GM12878 (cell line): ENCODE measurements at regions of chr12 and their contacts with region 1.

Region 1: GRCh38 chr12:59403259-59403932 is 192.4 kb upstream of the SLC16A7 start:
- DNase-seq: no peak
- ATAC-seq: peak; percentile 81
- H3K4me3 ChIP-seq: no peak overlapping the region
- H3K27ac ChIP-seq: no peak overlapping the region
- H3K4me1 ChIP-seq: no peaks in the 10 kb centered on the region
- H3K27me3 ChIP-seq: no peaks in the 10 kb centered on the region
- CTCF ChIP-seq: peak; percentile 72 to 77 (median 75)
- EP300 ChIP-seq: no peak
- POLR2A ChIP-seq: no peak
- RAD21 ChIP-seq: peak; percentile 86

Region 2: GRCh38 chr12:59808317-59808910 is 405.0 kb after region 1 on chr12:
- CTCF ChIA-PET with region 1: interaction called, 10 read pairs
- POLR2A ChIA-PET with region 1: no interaction called
- RAD21 ChIA-PET with region 1: no interaction called
- SMC1A ChIA-PET with region 1: interaction called, 4 read pairs
- in situ Hi-C with region 1: loop called (anchors 10 kb)
- intact Hi-C with region 1: loop called (anchors 1 kb)
- DNase-seq: no peak
- ATAC-seq: peak; percentile 94
- H3K4me3 ChIP-seq: no peak overlapping the region
- H3K27ac ChIP-seq: no peak overlapping the region
- H3K4me1 ChIP-seq: no peaks in the 10 kb centered on the region
- H3K27me3 ChIP-seq: no peaks in the 10 kb centered on the region
- CTCF ChIP-seq: peak; percentile 48 to 70 (median 69)
- EP300 ChIP-seq: no peak
- POLR2A ChIP-seq: no peak
- RAD21 ChIP-seq: peak; percentile 77

Region 3: GRCh38 chr12:59834659-59835474 is 431.5 kb after region 1 on chr12:
- CTCF ChIA-PET with region 1: interaction called, 16 read pairs
- POLR2A ChIA-PET with region 1: no interaction called
- RAD21 ChIA-PET with region 1: interaction called, 6 read pairs
- SMC1A ChIA-PET with region 1: interaction called, 7 read pairs
- in situ Hi-C with region 1: loop called (anchors 10 kb)
- intact Hi-C with region 1: loop called (anchors 1 kb)
- DNase-seq: no peak
- ATAC-seq: peak; percentile 74
- H3K4me3 ChIP-seq: no peak overlapping the region
- H3K27ac ChIP-seq: no peak overlapping the region
- H3K4me1 ChIP-seq: no peaks in the 10 kb centered on the region
- H3K27me3 ChIP-seq: no peaks in the 10 kb centered on the region
- CTCF ChIP-seq: peak; percentile 38 to 45 (median 42); a peak in 3 of 6 replicates
- EP300 ChIP-seq: no peak
- POLR2A ChIP-seq: no peak
- RAD21 ChIP-seq: peak; percentile 40; the same call in 1 of the 2 replicates

Region 4: DNA sequence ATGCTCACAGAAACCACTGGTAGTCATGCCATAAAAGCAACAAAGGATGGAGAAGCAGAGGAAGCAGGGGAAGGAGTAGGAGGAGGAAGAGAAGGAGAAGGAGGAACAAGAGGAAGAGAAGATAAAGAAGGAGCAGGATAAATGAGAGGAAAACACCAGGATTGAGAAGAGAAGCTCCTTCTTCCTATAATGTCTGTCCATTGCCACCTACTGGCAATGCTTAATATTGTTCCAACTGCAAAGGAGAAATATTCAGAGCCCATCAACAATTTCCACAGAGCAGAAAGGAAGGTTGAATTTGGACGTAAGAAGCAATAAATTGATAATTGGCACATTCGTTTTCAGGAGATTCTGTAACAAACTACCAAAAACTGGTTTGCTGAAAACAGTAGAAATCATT is 1090.8 kb after region 1 on chr12:
- CTCF ChIA-PET with region 1: no interaction called
- POLR2A ChIA-PET with region 1: no interaction called
- RAD21 ChIA-PET with region 1: no interaction called
- SMC1A ChIA-PET with region 1: no interaction called
- in situ Hi-C with region 1: no loop called
- intact Hi-C with region 1: loop called (anchors 1 kb)
- DNase-seq: no peak
- ATAC-seq: peak; percentile 41; the same call in 1 of the 3 replicates
- H3K4me3 ChIP-seq: no peak overlapping the region
- H3K27ac ChIP-seq: no peak overlapping the region
- H3K4me1 ChIP-seq: no peaks in the 10 kb centered on the region
- H3K27me3 ChIP-seq: no peaks in the 10 kb centered on the region
- CTCF ChIP-seq: peak; percentile 31 to 48 (median 33); a peak in 3 of 6 replicates
- EP300 ChIP-seq: no peak
- POLR2A ChIP-seq: no peak
- RAD21 ChIP-seq: peak; percentile 42; the same call in 1 of the 2 replicates